ENCODE measurements at regions of chr14 and their contacts with region 1.

Region 1: DNA sequence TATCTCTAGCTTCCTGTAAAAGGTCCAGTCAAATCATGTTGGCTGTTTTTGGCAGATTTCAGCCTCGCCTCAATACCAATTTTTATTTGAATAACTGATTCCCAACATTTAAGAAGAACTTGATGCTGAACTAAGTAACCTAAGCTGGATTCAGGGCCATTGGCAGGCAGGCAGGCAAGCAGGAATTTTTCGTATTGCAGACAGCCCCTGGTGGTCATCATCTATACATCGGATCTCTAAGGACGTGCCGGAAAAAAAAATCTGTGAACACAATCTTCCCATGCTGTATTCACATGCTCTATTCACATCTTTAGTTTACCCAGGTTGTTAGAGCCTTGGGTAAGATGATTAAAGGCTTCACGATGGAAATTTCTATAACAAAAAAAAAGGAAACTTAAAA is 7.0 kb downstream of the VCPKMT start:
- DNase-seq: peak; percentile 4
- ATAC-seq: peak; percentile 46; the same call in 1 of the 2 replicates
- H3K4me3 ChIP-seq: no peak overlapping the region
- H3K27ac ChIP-seq: no peak overlapping the region
- H3K4me1 ChIP-seq: peaks cover 0 to 4% of the 10 kb centered on the region in 2 experiments; a peak in 1 of 4 replicates
- H3K27me3 ChIP-seq: no peaks in the 10 kb centered on the region
- CTCF ChIP-seq: peak in 2 of 3 experiments; percentile 43 to 50; a peak in 3 of 6 replicates
- POLR2A ChIP-seq: no peak
- RAD21 ChIP-seq: peak; percentile 25; the same call in 1 of the 2 replicates

Region 2: DNA sequence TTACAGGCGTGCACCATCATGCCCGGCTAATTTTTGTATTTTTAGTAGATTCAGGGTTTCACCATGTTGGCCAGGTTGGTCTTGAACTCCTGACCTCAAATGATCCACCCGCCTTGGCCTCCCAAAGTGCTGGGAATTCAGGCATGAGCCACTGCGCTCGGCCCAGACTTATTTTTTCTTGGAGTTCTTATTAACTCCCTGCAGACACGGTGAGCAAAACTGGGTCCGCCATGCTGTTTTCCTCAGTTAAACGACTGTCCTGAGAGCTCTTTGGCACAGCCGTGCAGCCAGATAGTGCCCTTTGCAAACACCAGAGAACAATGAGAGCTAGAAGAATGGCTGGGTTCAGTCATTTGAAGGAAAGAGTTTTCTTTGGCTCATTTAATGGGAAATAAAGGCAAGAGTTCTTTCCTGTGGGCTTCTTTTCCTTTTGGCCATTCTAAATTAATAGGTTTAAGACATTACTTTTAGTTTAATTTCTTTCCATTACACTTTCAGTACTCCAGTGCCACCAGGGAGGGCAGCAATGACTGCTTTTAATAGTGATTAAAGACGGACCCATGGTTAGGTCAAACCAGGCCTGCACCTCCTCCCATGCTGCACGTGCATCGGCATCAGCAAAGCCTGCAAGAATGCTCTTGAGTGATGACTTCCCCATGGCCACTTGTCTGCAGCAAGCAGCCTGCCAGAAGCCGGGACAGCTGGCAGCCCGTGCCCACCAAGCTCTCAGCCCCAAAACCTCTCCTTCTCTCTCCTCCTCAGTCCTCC is 53.7 kb before region 1 on chr14:
- CTCF ChIA-PET with region 1: no interaction called
- POLR2A ChIA-PET with region 1: no interaction called
- RAD21 ChIA-PET with region 1: no interaction called
- intact Hi-C with region 1: no loop called
- DNase-seq: no peak
- ATAC-seq: peak; percentile 52; the same call in 1 of the 2 replicates
- H3K4me3 ChIP-seq: no peak overlapping the region
- H3K27ac ChIP-seq: no peak overlapping the region
- H3K4me1 ChIP-seq: peaks cover 5 to 23% of the 10 kb centered on the region in 2 experiments
- H3K27me3 ChIP-seq: no peaks in the 10 kb centered on the region
- CTCF ChIP-seq: peak in 2 of 3 experiments; percentile 23 to 24; a peak in 3 of 6 replicates
- POLR2A ChIP-seq: no peak
- RAD21 ChIP-seq: no peak

Region 3: GRCh38 chr14:50532502-50533240 is 423.3 kb after region 1 on chr14 and contains the start of gene MAP4K5:
- CTCF ChIA-PET with region 1: no interaction called
- POLR2A ChIA-PET with region 1: no interaction called
- RAD21 ChIA-PET with region 1: no interaction called
- intact Hi-C with region 1: loop called (anchors 5 kb)
- DNase-seq: peak; percentile 76
- ATAC-seq: peak; percentile 94
- H3K4me3 ChIP-seq: peak within 1 kb of the TSS; percentile 76 to 81
- H3K27ac ChIP-seq: peak within 1 kb of the TSS; percentile 88
- H3K4me1 ChIP-seq: peaks cover 9 to 27% of the 10 kb centered on the region in 2 experiments; a peak in 3 of 4 replicates
- H3K27me3 ChIP-seq: no peaks in the 10 kb centered on the region
- CTCF ChIP-seq: peak; percentile 79 to 89 (median 83)
- POLR2A ChIP-seq: peak; percentile 56
- RAD21 ChIP-seq: peak; percentile 97
- total RNA-seq, gene MAP4K5: 39.1 TPM